Activated T-helper 2 cell treated with anti-CD3 and anti-CD28 coated beads, Interferon-gamma antibody, Interleukin-2, Interleukin-4, amounts not matched to agents 10 μg/mL and 5 μg/mL and 100 μg/mL, durations not matched to agents 14 hours and 24 hours and 36 hours (primary cell): ENCODE measurements at regions of chr9 and their contacts with region 1.

Region 1: DNA sequence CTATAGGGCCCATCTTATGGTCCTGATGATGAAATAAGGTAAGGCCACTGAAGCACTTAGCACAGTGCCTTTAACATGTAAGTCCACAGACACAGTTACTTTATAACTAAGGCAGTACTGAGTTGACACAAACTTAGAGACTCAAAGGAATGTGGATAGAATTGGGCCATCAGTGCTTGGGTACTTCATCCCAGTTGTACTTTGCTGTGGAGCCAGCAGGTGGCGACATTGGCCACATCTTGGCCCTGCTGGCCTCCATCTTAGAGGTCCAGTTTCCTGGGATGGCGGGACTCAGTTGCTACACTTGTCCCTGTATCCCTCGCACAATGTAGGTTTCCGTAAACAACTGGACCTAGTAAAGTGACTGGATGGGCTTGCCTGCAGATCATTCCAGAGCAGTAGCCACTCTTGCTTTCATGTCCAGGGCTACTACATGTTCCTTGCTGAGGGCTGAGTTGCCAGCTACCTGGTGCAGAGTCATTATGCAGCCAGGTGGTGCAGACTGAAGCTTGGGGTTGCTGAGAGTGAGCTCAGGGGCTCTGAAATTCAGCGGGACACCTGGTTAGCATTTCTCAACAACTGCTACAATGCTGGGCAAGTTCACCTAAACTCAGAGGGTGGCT is 10.6 kb downstream of the MTAP start:
- DNase-seq: peak; percentile 49
- H3K4me3 Mint-ChIP-seq: no peak overlapping the region
- H3K27ac Mint-ChIP-seq: no peak overlapping the region
- H3K4me1 Mint-ChIP-seq: peaks cover 39% of the 10 kb centered on the region
- H3K27me3 Mint-ChIP-seq: no peaks in the 10 kb centered on the region

Region 2: DNA sequence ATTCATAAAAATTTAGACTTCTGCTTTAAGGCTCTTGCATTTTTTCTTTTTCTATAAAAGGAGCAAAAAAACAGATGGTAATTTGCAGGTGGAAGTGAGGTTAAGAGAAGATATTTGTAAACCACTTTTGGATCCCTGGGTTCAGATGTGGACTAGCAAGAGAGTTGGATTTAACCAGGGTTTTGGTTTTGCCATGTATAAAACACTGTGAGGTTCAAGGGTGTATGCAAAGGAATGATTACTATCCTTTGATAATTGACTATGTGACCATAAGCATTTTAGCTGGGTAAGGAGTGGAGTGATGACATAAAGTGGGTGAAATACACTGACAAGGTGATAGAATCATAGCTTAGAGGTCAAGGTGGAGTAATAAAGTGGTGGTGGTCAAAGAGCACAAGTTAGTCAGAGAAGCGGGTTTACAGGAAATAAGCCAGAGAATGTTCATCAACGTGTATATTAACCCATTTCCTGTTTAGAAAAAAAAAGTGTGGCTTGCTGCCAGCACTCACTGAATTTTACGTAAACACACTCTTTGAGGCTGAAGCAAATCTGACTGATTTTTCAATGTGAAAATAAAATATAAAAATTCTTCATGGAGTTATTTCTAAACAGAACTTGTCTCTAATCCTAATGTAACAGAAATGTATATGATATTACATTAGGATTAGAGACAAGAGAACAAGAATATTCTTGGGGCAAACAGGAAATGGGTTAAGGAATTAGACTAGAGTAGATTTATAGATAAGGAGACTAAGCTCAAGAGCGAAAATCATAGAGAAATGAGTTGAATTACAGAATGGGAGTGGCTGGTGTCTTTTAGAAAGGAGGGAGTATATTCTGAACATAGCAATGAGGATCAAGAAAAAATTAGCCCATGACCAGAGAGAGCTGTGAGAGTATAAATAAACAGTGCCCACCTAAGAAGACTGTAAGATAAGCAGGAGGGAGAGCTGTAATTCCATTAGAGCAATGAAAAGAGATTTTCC is 106.6 kb after region 1 on chr9:
- intact Hi-C with region 1: loop called (anchors 5 kb)
- DNase-seq: peak; percentile 14
- H3K4me3 Mint-ChIP-seq: peak overlapping the region; percentile 47
- H3K27ac Mint-ChIP-seq: peak overlapping the region; percentile 68
- H3K4me1 Mint-ChIP-seq: peaks cover 33% of the 10 kb centered on the region
- H3K27me3 Mint-ChIP-seq: no peaks in the 10 kb centered on the region

Region 3: GRCh38 chr9:22037954-22038690 is 225.1 kb after region 1 on chr9:
- intact Hi-C with region 1: loop called (anchors 1 kb)
- DNase-seq: no peak
- H3K4me3 Mint-ChIP-seq: no peak overlapping the region
- H3K27ac Mint-ChIP-seq: no peak overlapping the region
- H3K4me1 Mint-ChIP-seq: peaks cover 46% of the 10 kb centered on the region
- H3K27me3 Mint-ChIP-seq: peaks cover 26% of the 10 kb centered on the region

Region 4: DNA sequence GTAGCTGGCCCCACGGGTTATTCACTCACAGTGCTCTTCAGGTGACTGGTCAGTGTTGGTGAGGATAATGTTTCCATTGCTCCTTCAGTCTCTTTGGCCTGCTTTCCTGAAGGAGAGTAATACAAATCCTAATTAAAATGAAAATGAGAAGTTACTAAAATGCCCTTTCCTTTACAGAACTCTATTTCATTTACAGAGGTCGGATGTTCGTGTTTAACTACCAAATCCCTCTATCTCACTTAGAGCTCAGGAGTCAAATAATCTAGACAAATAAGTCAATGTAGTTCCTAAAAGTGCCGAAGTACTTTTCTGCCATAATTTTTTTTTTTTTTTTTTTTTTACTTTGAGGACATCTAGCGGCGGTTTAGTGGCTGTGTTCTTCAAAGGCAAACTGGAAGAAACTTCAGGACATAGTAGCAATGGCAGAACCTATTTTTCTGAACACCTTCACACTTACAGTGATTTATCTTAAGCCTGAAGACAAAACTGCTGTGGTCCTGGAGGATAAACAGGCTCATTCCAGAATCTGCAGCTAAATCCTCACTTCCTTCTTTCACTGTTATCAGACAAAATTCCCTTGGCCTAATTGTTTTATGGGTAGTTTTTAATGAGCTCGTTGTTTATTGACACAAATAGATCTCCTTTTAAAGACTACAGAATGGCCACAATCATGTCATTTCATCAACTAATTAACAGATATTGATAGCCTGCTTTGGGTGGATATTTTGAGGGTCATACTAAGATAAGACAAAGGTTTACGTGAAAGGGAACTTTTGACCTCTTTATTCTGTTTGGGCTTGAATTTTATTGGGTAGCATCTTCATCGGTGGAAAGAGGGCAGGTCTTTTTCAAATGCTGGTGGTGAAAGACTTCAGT is 426.0 kb after region 1 on chr9:
- intact Hi-C with region 1: loop called (anchors 1 kb)
- DNase-seq: no peak
- H3K4me3 Mint-ChIP-seq: no peak overlapping the region
- H3K27ac Mint-ChIP-seq: no peak overlapping the region
- H3K4me1 Mint-ChIP-seq: peaks cover 52% of the 10 kb centered on the region
- H3K27me3 Mint-ChIP-seq: peaks cover 41% of the 10 kb centered on the region

Region 5: GRCh38 chr9:22452415-22453010 is 639.5 kb after region 1 on chr9:
- intact Hi-C with region 1: loop called (anchors 1 kb)
- DNase-seq: no peak
- H3K4me3 Mint-ChIP-seq: no peak overlapping the region
- H3K27ac Mint-ChIP-seq: no peak overlapping the region
- H3K4me1 Mint-ChIP-seq: peaks cover 4% of the 10 kb centered on the region
- H3K27me3 Mint-ChIP-seq: peaks cover 28% of the 10 kb centered on the region